ENCODE measurements at regions of chr17 and their contacts with region 1.

Region 1: DNA sequence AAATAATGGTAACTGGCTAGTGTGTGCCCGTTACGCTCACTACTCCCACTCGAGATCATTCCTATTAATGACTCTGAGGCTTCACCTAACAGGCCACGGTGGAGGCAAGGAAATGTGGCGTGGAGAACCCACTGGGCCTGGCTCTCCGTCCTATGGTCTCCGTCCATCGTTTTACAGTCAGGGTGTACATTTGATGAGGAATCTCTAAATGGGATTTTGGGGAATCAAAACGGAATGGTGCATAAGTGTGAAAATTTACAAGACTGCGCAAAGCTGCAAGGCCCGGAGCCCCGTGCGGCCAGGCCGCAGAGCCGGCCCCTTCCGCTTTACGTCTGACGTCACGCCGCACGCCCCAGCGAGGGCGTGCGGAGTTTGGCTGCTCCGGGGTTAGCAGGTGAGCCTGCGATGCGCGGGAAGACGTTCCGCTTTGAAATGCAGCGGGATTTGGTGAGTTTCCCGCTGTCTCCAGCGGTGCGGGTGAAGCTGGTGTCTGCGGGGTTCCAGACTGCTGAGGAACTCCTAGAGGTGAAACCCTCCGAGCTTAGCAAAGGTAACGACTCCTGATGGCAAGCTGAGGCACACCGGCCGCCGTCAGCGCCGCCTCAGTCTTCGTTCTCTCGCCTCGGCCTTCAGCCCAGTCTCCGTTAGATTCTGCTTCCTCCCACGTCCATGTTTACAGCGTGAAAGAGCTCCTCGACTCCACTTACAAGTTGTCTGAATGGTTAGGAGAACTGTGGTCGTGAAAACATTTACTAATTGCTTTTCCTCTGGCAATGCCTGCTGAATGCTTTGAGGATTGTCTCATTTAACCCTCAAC is at the start of gene RAD51C:
- DNase-seq: peak; percentile 69 to 91 (median 82)
- ATAC-seq: peak; percentile 98 to 100 (median 99)
- H3K4me3 ChIP-seq: peak within 1 kb of the TSS; percentile 81 to 93
- H3K4me3 Mint-ChIP-seq: peak within 1 kb of the TSS; percentile 90 to 98 (median 94)
- H3K27ac ChIP-seq: peak within 1 kb of the TSS; percentile 78
- H3K27ac Mint-ChIP-seq: peak within 1 kb of the TSS; percentile 89 to 91
- H3K4me1 ChIP-seq: peaks cover 8 to 14% of the 10 kb centered on the region in 2 experiments
- H3K4me1 Mint-ChIP-seq: peaks cover 26 to 33% (median 33%) of the 10 kb centered on the region in 3 donors
- H3K27me3 ChIP-seq: no peaks in the 10 kb centered on the region
- H3K27me3 Mint-ChIP-seq: no peaks in the 10 kb centered on the region
- total RNA-seq, gene RAD51C: 10.9 to 28.4 (median 18.1) TPM

Region 2: GRCh38 chr17:58658804-58659713 is 33.4 kb before region 1 on chr17:
- CTCF ChIA-PET with region 1: no interaction called
- POLR2A ChIA-PET with region 1: interaction called in 1 of 2 experiments, 10 read pairs
- DNase-seq: peak; percentile 45 to 93 (median 77)
- ATAC-seq: peak; percentile 79 to 95 (median 94)
- H3K4me3 ChIP-seq: peak overlapping the region; percentile 53 to 57
- H3K4me3 Mint-ChIP-seq: peak overlapping the region; percentile 78 to 87 (median 79)
- H3K27ac ChIP-seq: peak overlapping the region; percentile 97
- H3K27ac Mint-ChIP-seq: peak overlapping the region; percentile 96 to 100
- H3K4me1 ChIP-seq: peaks cover 2 to 14% of the 10 kb centered on the region in 2 experiments
- H3K4me1 Mint-ChIP-seq: peaks cover 19 to 25% (median 20%) of the 10 kb centered on the region in 3 donors
- H3K27me3 ChIP-seq: peaks cover 0 to 2% of the 10 kb centered on the region in 2 experiments
- H3K27me3 Mint-ChIP-seq: no peaks in the 10 kb centered on the region

Region 3: DNA sequence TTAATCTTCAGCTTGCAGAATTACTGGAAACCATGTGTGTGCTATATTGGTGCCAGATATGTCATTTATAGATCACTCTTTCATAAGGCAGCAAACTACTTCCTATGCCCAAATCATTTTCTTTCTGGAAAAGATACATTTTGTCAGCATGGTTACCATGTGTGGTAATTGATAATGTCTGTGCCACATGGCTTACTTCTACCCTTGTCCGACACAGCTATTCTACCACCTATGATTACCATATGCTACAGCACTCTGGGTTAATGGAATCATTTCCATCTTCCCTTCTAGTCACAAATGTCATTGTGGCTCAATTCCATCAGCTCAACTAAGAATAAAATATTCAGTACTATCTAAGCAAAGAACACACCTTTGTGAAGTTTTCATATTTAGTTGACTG is 55.2 kb after region 1 on chr17:
- CTCF ChIA-PET with region 1: no interaction called
- POLR2A ChIA-PET with region 1: no interaction called
- DNase-seq: no peak
- ATAC-seq: no peak
- H3K4me3 ChIP-seq: no peak overlapping the region
- H3K4me3 Mint-ChIP-seq: no peak overlapping the region
- H3K27ac ChIP-seq: no peak overlapping the region
- H3K27ac Mint-ChIP-seq: no peak overlapping the region
- H3K4me1 ChIP-seq: no peaks in the 10 kb centered on the region
- H3K4me1 Mint-ChIP-seq: no peaks in the 10 kb centered on the region
- H3K27me3 ChIP-seq: no peaks in the 10 kb centered on the region
- H3K27me3 Mint-ChIP-seq: peaks cover 5 to 6% of the 10 kb centered on the region in 2 donors

Region 4: DNA sequence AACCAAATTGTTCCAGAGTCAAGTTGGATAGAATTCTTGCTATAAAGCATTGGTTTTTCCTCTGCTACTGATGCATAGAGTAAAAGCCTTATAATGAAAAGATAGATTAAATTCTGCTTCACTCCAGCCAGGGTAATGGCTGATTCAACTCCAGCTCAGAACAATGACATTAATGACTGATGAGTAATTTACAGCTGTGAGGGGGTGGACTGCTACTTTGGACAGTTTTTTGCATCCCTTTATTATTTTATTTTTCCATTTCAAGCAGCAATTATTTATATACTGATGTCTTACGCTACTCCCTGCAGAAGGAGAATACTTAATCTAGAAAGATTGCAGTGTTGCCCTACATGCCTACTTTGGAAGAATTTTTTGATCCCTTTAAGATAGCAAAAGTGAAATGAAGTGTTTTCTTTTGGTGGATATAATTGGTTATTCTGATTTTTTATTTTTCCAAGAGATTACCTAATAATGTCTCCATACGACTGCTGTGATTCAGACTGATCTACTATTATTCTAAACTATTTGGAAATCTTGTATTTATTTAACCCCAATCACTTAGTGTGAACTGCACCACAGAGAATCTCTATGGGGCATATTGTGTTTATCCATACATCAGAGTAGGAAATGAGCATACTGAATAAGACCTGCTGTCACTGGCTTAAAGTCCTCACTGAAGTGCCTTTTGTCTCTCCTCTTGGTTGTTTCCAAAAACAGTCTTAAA is 264.7 kb after region 1 on chr17:
- CTCF ChIA-PET with region 1: no interaction called
- POLR2A ChIA-PET with region 1: no interaction called
- DNase-seq: no peak
- ATAC-seq: no peak
- H3K4me3 ChIP-seq: no peak overlapping the region
- H3K4me3 Mint-ChIP-seq: no peak overlapping the region
- H3K27ac ChIP-seq: no peak overlapping the region
- H3K27ac Mint-ChIP-seq: no peak overlapping the region
- H3K4me1 ChIP-seq: no peaks in the 10 kb centered on the region
- H3K4me1 Mint-ChIP-seq: no peaks in the 10 kb centered on the region
- H3K27me3 ChIP-seq: peaks cover 0 to 6% of the 10 kb centered on the region in 2 experiments
- H3K27me3 Mint-ChIP-seq: peaks cover 3 to 6% of the 10 kb centered on the region in 2 donors